GM13976 (cell line): ENCODE measurements at regions of chr7 and their contacts with region 1.

Region 1: GRCh38 chr7:91089382-91089963 is 174.8 kb upstream of the FZD1 start:
- DNase-seq: no peak
- CTCF ChIP-seq: peak; percentile 42

Region 2: GRCh38 chr7:91373111-91373800 is 283.8 kb after region 1 on chr7:
- in situ Hi-C with region 1: no loop called
- DNase-seq: no peak
- CTCF ChIP-seq: no peak

Region 3: DNA sequence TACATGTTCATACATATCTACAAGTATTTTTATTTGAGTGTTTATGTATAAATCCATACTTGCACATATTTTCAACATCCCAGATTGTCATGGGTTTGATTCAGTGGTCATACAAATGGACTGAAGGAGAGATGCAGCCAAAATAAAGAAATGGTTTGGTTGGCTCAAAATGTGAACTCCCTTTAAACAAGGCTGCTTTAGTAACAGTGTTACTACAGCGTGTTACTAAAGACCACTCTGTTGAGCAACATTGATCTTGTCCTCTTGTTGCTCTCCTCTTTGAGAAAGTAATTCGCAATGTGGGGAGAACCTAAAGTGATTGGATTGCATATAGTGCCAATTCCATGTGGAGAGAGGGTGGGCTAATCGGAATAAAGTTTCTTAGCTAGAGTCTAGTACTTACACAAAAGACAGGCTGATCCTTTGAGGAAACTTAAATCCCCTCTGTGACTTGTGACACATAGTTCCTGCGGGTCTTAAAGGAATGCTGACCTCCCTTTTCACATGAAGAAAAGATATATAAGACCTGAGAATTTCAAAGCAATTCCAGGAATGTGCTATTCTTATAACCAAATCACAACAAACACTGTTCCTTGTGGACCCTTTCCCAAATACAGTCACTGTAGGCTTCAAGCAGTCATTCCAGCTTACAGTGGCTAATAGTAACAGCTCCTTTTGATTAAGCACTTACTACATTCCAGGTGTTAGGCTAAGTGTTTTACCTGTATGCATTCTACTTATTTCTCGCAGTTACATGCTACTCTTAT is 319.1 kb after region 1 on chr7:
- in situ Hi-C with region 1: no loop called
- DNase-seq: no peak
- CTCF ChIP-seq: no peak

Region 4: DNA sequence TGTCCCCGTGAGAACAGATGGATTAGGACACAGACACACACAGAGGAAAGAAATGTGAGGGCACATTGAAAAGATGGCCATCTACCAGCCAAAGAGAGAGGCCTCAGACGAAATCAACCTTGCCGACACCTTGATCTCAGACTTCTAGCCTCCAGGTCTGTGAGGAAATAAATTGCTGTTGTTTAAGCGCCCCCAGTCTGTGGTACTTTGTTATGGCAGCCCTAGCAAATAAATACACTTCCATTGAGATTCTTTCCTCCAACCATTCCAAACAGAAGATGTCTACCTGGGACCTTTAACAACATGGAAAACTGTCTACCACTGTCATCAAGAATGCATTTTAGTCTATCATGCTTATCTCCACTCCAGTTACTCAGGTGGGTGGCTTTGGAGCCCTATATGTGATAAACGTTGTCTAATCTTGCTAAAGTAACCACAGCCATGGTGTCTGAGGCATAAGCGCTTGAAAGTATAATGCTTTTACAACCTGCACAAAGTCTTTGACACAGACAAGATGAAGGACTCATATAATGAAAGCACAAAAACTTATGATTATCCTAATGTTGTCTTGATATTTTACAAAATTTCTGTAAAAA is 546.8 kb after region 1 on chr7:
- in situ Hi-C with region 1: loop called (anchors 25 kb)
- DNase-seq: no peak
- CTCF ChIP-seq: peak; percentile 48